ENCODE measurements at regions of chr11 and their contacts with region 1.

Region 1: GRCh38 chr11:4072668-4073285 is 21.8 kb upstream of the RRM1 start:
- DNase-seq: peak; percentile 62
- ATAC-seq: peak; percentile 75
- H3K4me3 Mint-ChIP-seq: no peak overlapping the region
- H3K27ac Mint-ChIP-seq: no peak overlapping the region
- H3K4me1 Mint-ChIP-seq: peaks cover 48% of the 10 kb centered on the region
- H3K27me3 Mint-ChIP-seq: no peaks in the 10 kb centered on the region

Region 2: DNA sequence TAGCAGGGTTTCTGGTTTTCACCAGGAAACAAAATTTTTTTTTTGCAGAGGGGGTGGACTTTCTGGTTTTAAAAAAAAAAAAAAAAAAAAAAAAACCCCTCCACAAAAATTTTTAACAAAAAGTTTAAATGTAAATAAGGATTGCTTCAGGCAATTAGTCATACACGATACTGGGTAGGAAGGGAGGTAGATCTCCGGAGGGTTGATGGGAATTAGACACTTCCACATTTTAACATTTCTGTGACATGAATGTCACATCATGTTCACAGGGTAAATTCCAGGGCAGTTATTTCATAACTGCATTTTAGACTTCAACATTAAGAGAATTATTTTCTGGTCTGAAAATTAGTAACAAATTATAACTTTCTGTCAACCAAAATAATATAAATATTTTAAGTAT is 291.4 kb before region 1 on chr11:
- CTCF ChIA-PET with region 1: interaction called, 17 read pairs
- POLR2A ChIA-PET with region 1: no interaction called
- intact Hi-C with region 1: no loop called
- DNase-seq: no peak
- ATAC-seq: no peak
- H3K4me3 Mint-ChIP-seq: no peak overlapping the region
- H3K27ac Mint-ChIP-seq: peak overlapping the region; percentile 72
- H3K4me1 Mint-ChIP-seq: peaks cover 47% of the 10 kb centered on the region
- H3K27me3 Mint-ChIP-seq: no peaks in the 10 kb centered on the region

Region 3: DNA sequence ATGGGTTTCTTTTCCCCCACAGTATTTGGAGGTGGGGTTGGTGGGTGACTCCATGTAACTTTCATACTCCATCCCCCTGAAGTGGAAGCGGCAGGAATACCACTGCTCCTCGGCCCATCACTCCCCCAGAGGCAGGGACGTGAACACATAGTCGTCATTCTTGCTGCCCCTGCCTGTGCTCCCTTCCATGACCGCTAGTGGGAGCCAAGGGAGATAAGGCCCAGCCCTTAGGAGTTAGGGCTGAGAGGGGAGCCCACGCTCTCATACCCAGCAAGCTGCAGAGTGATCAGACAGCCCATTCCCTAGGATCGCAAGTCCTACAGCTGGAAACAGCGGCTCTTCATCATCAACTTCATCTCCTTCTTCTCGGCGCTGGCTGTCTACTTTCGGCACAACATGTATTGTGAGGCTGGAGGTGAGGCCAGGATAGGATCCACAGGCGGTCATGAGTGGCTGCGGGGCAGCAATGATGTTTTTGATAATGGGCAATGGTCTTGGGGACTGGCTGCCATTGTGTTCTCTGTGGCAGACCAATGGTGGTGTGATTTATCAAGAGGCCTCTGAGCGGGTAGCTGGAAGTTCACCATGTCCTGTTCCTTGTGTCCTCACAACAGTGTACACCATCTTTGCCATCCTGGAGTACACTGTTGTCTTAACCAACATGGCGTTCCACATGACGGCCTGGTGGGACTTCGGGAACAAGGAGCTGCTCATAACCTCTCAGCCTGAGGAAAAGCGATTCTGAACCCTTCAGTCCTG is 247.9 kb before region 1 on chr11:
- CTCF ChIA-PET with region 1: interaction called, 17 read pairs
- POLR2A ChIA-PET with region 1: no interaction called
- intact Hi-C with region 1: loop called (anchors 1 kb)
- DNase-seq: peak; percentile 89
- ATAC-seq: peak; percentile 93
- H3K4me3 Mint-ChIP-seq: no peak overlapping the region
- H3K27ac Mint-ChIP-seq: peak overlapping the region; percentile 68
- H3K4me1 Mint-ChIP-seq: peaks cover 27% of the 10 kb centered on the region
- H3K27me3 Mint-ChIP-seq: no peaks in the 10 kb centered on the region

Region 4: GRCh38 chr11:3849297-3849874 is 223.4 kb before region 1 on chr11:
- CTCF ChIA-PET with region 1: interaction called, 299 read pairs
- POLR2A ChIA-PET with region 1: interaction called, 4 read pairs
- intact Hi-C with region 1: loop called (anchors 1 kb)
- DNase-seq: peak; percentile 60
- ATAC-seq: peak; percentile 60
- H3K4me3 Mint-ChIP-seq: no peak overlapping the region
- H3K27ac Mint-ChIP-seq: peak overlapping the region; percentile 1
- H3K4me1 Mint-ChIP-seq: peaks cover 43% of the 10 kb centered on the region
- H3K27me3 Mint-ChIP-seq: no peaks in the 10 kb centered on the region

Region 5: DNA sequence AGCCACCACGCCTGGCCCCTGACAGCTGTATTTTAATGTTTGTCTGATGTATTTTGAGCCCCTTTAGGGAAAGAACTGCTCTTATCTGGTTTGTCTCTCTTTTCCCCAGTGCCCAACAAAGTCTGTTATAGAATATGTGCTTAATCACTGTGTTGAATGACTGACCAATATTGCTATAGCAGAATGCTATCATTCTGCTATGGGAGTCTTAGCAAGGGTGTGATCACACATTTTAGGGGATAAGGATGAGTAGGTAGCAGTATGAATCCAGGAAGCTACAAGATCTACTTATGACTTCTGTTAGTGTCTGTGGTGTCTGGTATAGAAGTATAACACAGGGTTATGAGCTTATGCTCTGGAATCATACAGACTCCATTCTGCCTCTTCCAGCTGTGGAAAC is 95.7 kb before region 1 on chr11:
- CTCF ChIA-PET with region 1: interaction called, 16 read pairs
- POLR2A ChIA-PET with region 1: no interaction called
- intact Hi-C with region 1: no loop called
- DNase-seq: no peak
- ATAC-seq: peak; percentile 74
- H3K4me3 Mint-ChIP-seq: no peak overlapping the region
- H3K27ac Mint-ChIP-seq: no peak overlapping the region
- H3K4me1 Mint-ChIP-seq: peaks cover 54% of the 10 kb centered on the region
- H3K27me3 Mint-ChIP-seq: no peaks in the 10 kb centered on the region

Region 6: GRCh38 chr11:4049006-4049405 is 23.8 kb before region 1 on chr11:
- CTCF ChIA-PET with region 1: interaction called, 14 read pairs
- POLR2A ChIA-PET with region 1: no interaction called
- intact Hi-C with region 1: no loop called
- DNase-seq: no peak
- ATAC-seq: no peak
- H3K4me3 Mint-ChIP-seq: no peak overlapping the region
- H3K27ac Mint-ChIP-seq: no peak overlapping the region
- H3K4me1 Mint-ChIP-seq: peaks cover 20% of the 10 kb centered on the region
- H3K27me3 Mint-ChIP-seq: no peaks in the 10 kb centered on the region

Region 7: GRCh38 chr11:4178813-4179662 is 106.3 kb after region 1 on chr11:
- CTCF ChIA-PET with region 1: no interaction called
- POLR2A ChIA-PET with region 1: no interaction called
- intact Hi-C with region 1: no loop called
- DNase-seq: no peak
- ATAC-seq: no peak
- H3K4me3 Mint-ChIP-seq: no peak overlapping the region
- H3K27ac Mint-ChIP-seq: no peak overlapping the region
- H3K4me1 Mint-ChIP-seq: no peaks in the 10 kb centered on the region
- H3K27me3 Mint-ChIP-seq: peaks cover 8% of the 10 kb centered on the region